Left lung (tissue), 14 donors: ENCODE measurements at regions of chr1 and their contacts with region 1.

Region 1: DNA sequence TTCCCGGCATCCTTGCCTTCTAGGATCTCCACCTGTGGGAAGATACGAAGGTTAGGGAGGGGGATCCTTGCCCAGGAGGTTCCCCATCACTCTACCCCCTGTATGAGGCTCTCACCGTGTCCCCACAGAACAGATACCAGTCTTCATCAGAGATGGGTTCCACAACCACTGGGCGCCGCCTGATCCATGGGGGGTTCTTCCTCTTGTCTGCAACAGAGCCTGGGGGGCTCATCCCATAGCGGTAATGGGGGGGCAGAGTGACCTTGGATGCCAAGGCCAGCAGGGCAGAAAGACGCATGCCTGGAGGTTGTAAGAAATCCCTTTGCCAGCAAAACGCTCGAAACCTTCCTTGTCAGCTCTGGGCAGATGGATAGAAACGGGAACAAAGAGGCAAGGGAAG is 2.5 kb downstream of the MRPL24 start:
- DNase-seq: no peak
- ATAC-seq: no peak
- H3K4me3 ChIP-seq: no peak overlapping the region
- H3K27ac ChIP-seq: no peak overlapping the region
- H3K4me1 ChIP-seq: peaks cover 5 to 29% of the 10 kb centered on the region in 2 donors
- H3K27me3 ChIP-seq: no peaks in the 10 kb centered on the region
- CTCF ChIP-seq: no peak

Region 2: GRCh38 chr1:156773607-156774006 is 35.2 kb after region 1 on chr1:
- intact Hi-C with region 1: loop called in 1 of 2 experiments (anchors 5 kb)
- DNase-seq: no peak
- ATAC-seq: no peak
- H3K4me3 ChIP-seq: no peak overlapping the region
- H3K27ac ChIP-seq: no peak overlapping the region
- H3K4me1 ChIP-seq: peaks cover 18 to 58% of the 10 kb centered on the region in 2 donors
- H3K27me3 ChIP-seq: no peaks in the 10 kb centered on the region
- CTCF ChIP-seq: no peak

Region 3: GRCh38 chr1:156801409-156802121 is 63.2 kb after region 1 on chr1:
- intact Hi-C with region 1: no loop called
- DNase-seq: no peak
- ATAC-seq: no peak
- H3K4me3 ChIP-seq: no peak overlapping the region
- H3K27ac ChIP-seq: no peak overlapping the region
- H3K4me1 ChIP-seq: peaks cover 0 to 7% of the 10 kb centered on the region in 2 donors
- H3K27me3 ChIP-seq: no peaks in the 10 kb centered on the region
- CTCF ChIP-seq: no peak